ENCODE measurements at regions of chr9 and their contacts with region 1.

Region 1: GRCh38 chr9:77456829-77457437 is 191.2 kb downstream of the GNA14 start:
- DNase-seq: peak; percentile 89
- ATAC-seq: peak; percentile 78
- H3K4me3 ChIP-seq: no peak overlapping the region
- H3K27ac ChIP-seq: no peak overlapping the region
- H3K4me1 ChIP-seq: peaks cover 0 to 10% of the 10 kb centered on the region in 2 experiments; a peak in 2 of 4 replicates
- H3K27me3 ChIP-seq: no peaks in the 10 kb centered on the region
- CTCF ChIP-seq: peak; percentile 59 to 91 (median 87)
- POLR2A ChIP-seq: no peak
- RAD21 ChIP-seq: peak; percentile 47

Region 2: DNA sequence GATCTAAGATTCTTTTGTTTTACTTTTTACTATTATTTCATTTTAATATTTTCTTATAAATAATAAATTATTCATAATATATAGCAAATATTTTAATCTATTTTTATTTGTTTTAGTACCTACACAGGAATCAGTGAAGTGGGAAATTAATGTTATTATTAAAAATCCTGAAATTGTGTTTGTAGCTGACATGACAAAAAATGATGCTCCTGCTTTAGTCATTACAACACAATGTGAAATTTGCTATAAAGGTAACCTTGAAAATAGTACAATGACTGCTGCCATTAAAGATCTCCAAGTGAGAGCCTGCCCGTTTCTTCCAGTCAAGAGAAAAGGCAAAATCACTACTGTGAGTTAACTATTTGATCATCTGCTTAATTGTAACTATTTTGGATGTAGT is 140.9 kb before region 1 on chr9:
- CTCF ChIA-PET with region 1: no interaction called
- POLR2A ChIA-PET with region 1: no interaction called
- RAD21 ChIA-PET with region 1: no interaction called
- intact Hi-C with region 1: no loop called
- DNase-seq: no peak
- ATAC-seq: no peak
- H3K4me3 ChIP-seq: no peak overlapping the region
- H3K27ac ChIP-seq: no peak overlapping the region
- H3K4me1 ChIP-seq: no peaks in the 10 kb centered on the region
- H3K27me3 ChIP-seq: no peaks in the 10 kb centered on the region
- CTCF ChIP-seq: no peak
- POLR2A ChIP-seq: no peak
- RAD21 ChIP-seq: no peak

Region 3: DNA sequence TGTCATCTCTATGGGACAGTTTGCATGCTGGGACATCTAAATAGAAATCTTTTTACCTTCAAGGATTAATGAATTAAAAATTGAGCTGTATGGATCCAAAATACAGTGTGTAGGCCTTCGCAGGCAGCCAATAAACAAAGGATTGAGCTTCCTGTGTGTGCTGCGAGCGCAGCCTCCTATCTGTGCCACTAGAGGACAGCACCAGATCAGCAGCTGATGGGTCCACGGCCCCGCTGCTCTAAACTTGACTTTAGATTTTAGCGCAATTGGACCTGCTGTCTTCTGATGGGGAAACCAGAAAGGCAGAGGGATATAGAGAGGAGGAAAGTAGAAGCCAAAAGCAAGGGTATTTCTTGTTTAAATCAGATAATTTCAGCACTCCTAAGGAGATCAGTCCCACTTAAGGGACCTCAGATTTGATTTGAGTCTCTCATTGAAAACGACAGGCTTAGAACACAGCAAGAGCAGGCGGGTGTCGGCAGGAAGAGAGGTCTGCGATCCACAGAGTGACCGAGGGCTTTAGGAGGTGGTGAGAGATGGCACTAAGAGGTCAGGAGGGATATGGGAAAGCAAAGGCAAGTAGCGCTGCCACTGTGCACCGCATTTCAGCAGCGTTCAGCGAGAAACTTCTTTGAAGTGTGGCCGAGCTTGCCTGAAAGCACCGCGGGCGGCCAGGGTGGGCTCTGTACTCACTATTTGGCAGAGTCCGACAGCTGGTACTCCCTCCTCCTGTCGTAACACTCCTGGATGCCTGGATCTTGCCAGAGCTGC is 23.1 kb before region 1 on chr9:
- CTCF ChIA-PET with region 1: interaction called, 20 read pairs
- POLR2A ChIA-PET with region 1: no interaction called
- RAD21 ChIA-PET with region 1: no interaction called
- intact Hi-C with region 1: no loop called
- DNase-seq: peak; percentile 33
- ATAC-seq: peak; percentile 99
- H3K4me3 ChIP-seq: no peak overlapping the region
- H3K27ac ChIP-seq: no peak overlapping the region
- H3K4me1 ChIP-seq: no peaks in the 10 kb centered on the region
- H3K27me3 ChIP-seq: no peaks in the 10 kb centered on the region
- CTCF ChIP-seq: peak; percentile 69 to 98 (median 98)
- POLR2A ChIP-seq: no peak
- RAD21 ChIP-seq: peak; percentile 90

Region 4: GRCh38 chr9:77488439-77489126 is 31.6 kb after region 1 on chr9:
- CTCF ChIA-PET with region 1: interaction called, 25 read pairs
- POLR2A ChIA-PET with region 1: no interaction called
- RAD21 ChIA-PET with region 1: no interaction called
- intact Hi-C with region 1: loop called (anchors 1 kb)
- DNase-seq: peak; percentile 7
- ATAC-seq: peak; percentile 77
- H3K4me3 ChIP-seq: no peak overlapping the region
- H3K27ac ChIP-seq: no peak overlapping the region
- H3K4me1 ChIP-seq: no peaks in the 10 kb centered on the region
- H3K27me3 ChIP-seq: no peaks in the 10 kb centered on the region
- CTCF ChIP-seq: peak; percentile 51 to 64 (median 56); a peak in 5 of 6 replicates
- POLR2A ChIP-seq: no peak
- RAD21 ChIP-seq: peak; percentile 70

Region 5: GRCh38 chr9:77595426-77596095 is 138.6 kb after region 1 on chr9:
- CTCF ChIA-PET with region 1: no interaction called
- POLR2A ChIA-PET with region 1: no interaction called
- RAD21 ChIA-PET with region 1: no interaction called
- intact Hi-C with region 1: no loop called
- DNase-seq: no peak
- ATAC-seq: no peak
- H3K4me3 ChIP-seq: no peak overlapping the region
- H3K27ac ChIP-seq: no peak overlapping the region
- H3K4me1 ChIP-seq: no peaks in the 10 kb centered on the region
- H3K27me3 ChIP-seq: 0 out of 2 replicates have a peak, but pooled peaks cover 4% of the 10 kb centered on the region
- CTCF ChIP-seq: no peak
- POLR2A ChIP-seq: no peak
- RAD21 ChIP-seq: no peak

Region 6: GRCh38 chr9:77751341-77752091 is 294.6 kb after region 1 on chr9:
- CTCF ChIA-PET with region 1: interaction called, 20 read pairs
- POLR2A ChIA-PET with region 1: no interaction called
- RAD21 ChIA-PET with region 1: no interaction called
- intact Hi-C with region 1: loop called (anchors 2 kb)
- DNase-seq: peak; percentile 12
- ATAC-seq: peak; percentile 72
- H3K4me3 ChIP-seq: no peak overlapping the region
- H3K27ac ChIP-seq: no peak overlapping the region
- H3K4me1 ChIP-seq: no peaks in the 10 kb centered on the region
- H3K27me3 ChIP-seq: no peaks in the 10 kb centered on the region
- CTCF ChIP-seq: peak; percentile 39 to 62 (median 46); a peak in 4 of 6 replicates
- POLR2A ChIP-seq: no peak
- RAD21 ChIP-seq: peak; percentile 66

Region 7: GRCh38 chr9:77876091-77876490 is 419.2 kb after region 1 on chr9:
- CTCF ChIA-PET with region 1: no interaction called
- POLR2A ChIA-PET with region 1: no interaction called
- RAD21 ChIA-PET with region 1: no interaction called
- intact Hi-C with region 1: no loop called
- DNase-seq: no peak
- ATAC-seq: no peak
- H3K4me3 ChIP-seq: no peak overlapping the region
- H3K27ac ChIP-seq: no peak overlapping the region
- H3K4me1 ChIP-seq: peaks cover 25 to 27% of the 10 kb centered on the region in 2 experiments
- H3K27me3 ChIP-seq: no peaks in the 10 kb centered on the region
- CTCF ChIP-seq: no peak
- POLR2A ChIP-seq: no peak
- RAD21 ChIP-seq: no peak

Region 8: GRCh38 chr9:78121488-78121887 is 664.6 kb after region 1 on chr9:
- CTCF ChIA-PET with region 1: interaction called, 9 read pairs
- POLR2A ChIA-PET with region 1: no interaction called
- RAD21 ChIA-PET with region 1: no interaction called
- intact Hi-C with region 1: loop called (anchors 2 kb)
- DNase-seq: peak; percentile 35
- ATAC-seq: peak; percentile 62; the same call in 1 of the 2 replicates
- H3K4me3 ChIP-seq: no peak overlapping the region
- H3K27ac ChIP-seq: no peak overlapping the region
- H3K4me1 ChIP-seq: no peaks in the 10 kb centered on the region
- H3K27me3 ChIP-seq: no peaks in the 10 kb centered on the region
- CTCF ChIP-seq: peak; percentile 61 to 80 (median 77)
- POLR2A ChIP-seq: no peak
- RAD21 ChIP-seq: peak; percentile 81